H1 (cell line): ENCODE measurements at regions of chr4 and their contacts with region 1.

Region 1: DNA sequence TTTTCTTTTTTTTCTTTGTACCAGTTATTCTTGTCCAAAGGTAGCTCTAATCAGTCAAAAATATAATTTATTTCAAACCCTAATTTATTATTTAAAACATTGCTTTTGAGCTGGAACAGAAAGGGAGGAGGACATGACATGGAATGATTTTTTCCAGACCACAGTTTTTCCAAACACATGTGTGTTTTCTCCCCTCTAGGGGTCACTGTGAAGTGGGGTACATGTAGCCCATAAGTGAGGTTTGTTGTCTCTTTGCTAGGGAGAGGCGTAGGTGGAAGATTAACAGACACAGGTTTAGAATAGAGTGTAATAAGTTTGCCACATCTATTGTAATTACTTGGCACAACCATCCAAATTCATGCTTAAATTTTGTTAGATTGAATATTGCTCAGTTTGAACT is 83.0 kb downstream of the TNIP2 start:
- DNase-seq: no peak
- H3K4me3 ChIP-seq: no peak overlapping the region
- H3K27ac ChIP-seq: no peak overlapping the region
- H3K4me1 ChIP-seq: no peaks in the 10 kb centered on the region
- H3K27me3 ChIP-seq: no peaks in the 10 kb centered on the region
- CTCF ChIP-seq: peak in 2 of 3 experiments; percentile 19 to 45; a peak in 2 of 4 replicates
- EP300 ChIP-seq: no peak
- POLR2A ChIP-seq: no peak
- RAD21 ChIP-seq: peak; percentile 26 to 33; a peak in 3 of 4 replicates

Region 2: GRCh38 chr4:2685541-2685940 is 12.4 kb after region 1 on chr4:
- CTCF ChIA-PET with region 1: interaction called, 26 read pairs
- POLR2A ChIA-PET with region 1: no interaction called
- DNase-seq: no peak
- H3K4me3 ChIP-seq: no peak overlapping the region
- H3K27ac ChIP-seq: no peak overlapping the region
- H3K4me1 ChIP-seq: no peaks in the 10 kb centered on the region
- H3K27me3 ChIP-seq: no peaks in the 10 kb centered on the region
- CTCF ChIP-seq: no peak
- EP300 ChIP-seq: no peak
- POLR2A ChIP-seq: no peak
- RAD21 ChIP-seq: no peak

Region 3: DNA sequence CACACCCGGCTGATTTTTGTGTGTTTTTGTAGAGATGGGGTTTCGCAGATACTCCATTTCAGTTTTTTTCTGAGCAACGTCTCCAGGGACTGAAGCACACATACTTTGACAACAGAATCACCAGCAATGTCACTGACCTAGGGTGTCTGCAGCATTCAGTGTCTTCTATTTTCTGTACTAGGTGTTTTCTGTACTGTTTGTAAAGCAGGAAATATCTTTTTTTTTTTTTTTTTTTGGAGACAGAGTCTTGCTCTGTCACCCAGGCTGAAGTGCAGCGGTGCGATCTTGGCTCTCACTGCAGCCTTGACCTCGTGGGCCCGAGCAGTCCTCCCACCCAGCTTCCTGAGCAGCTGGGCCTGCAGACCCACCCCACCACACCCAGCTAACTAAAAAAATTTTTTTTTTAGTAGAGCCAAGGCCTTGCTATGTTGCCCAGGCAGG is 179.3 kb after region 1 on chr4:
- CTCF ChIA-PET with region 1: no interaction called
- POLR2A ChIA-PET with region 1: no interaction called
- DNase-seq: no peak
- H3K4me3 ChIP-seq: no peak overlapping the region
- H3K27ac ChIP-seq: no peak overlapping the region
- H3K4me1 ChIP-seq: peaks cover 0 to 3% (median 0%) of the 10 kb centered on the region in 4 experiments; a peak in 2 of 7 replicates
- H3K27me3 ChIP-seq: no peaks in the 10 kb centered on the region
- CTCF ChIP-seq: no peak
- EP300 ChIP-seq: no peak
- POLR2A ChIP-seq: no peak
- RAD21 ChIP-seq: no peak